ENCODE measurements at regions of chr22 and their contacts with region 1.

Region 1: DNA sequence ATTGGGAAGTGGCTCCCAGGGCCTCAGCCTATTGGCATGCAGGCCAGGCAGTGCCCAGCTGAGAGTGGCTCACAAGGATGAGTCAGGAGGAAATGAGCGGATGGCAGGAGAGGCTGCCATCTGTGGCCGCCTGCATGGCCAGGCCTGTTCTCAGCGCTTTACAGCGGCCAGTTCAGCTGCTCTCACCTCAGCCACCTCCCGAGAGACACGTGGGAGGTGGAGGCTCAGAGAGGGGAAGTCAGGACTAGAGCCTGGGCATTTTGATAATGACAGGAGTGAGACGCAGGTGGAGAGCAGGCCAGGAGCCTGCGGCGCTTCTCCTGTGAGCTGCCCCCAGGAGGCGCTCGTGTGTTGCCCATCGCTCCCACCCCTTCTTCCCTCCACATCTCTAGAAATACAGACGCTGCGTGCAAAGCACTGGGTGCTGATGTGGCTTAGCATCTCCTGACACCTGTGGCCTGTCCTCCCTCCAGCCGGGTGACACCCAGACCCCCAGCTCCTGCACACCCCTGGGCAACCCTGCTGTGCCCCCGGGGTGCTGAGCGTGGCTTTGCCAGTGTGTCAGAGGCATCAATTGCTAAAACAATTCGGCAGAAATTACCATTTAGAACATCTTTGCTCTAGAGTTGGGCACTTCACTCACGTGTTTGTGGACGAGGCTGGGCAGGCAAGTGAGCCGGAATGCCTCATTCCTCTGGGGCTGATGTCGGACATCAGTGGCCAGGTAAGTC is 21.4 kb upstream of the PANX2 start:
- DNase-seq: peak in 2 of 3 donors; percentile 74 to 77
- ATAC-seq: peak; percentile 44 to 61
- H3K4me3 ChIP-seq: no peak overlapping the region
- H3K27ac ChIP-seq: no peak overlapping the region
- H3K4me1 ChIP-seq: no peaks in the 10 kb centered on the region
- H3K27me3 ChIP-seq: no peaks in the 10 kb centered on the region

Region 2: DNA sequence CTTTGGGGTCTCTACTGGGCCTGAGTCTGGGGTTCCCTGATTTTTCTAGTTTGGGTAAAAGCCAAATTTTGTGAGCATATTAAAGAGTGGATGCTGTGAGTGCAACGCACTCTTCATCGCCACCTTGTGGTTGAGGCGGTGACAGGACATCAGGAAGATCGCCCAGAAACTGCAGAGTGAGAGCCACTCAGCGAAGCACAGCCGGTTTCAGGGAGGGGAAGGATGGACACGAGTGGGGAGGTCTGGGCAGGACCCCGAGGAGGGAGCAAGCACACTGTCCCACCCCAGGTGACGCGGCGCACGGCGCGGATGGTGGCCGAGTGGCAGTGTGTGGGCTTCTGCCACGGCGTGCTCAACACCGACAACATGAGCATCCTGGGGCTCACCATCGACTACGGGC is 60.7 kb after region 1 on chr22:
- intact Hi-C with region 1: loop called (anchors 2 to 5 kb)
- DNase-seq: peak; percentile 77 to 87 (median 79)
- ATAC-seq: peak; percentile 7 to 28
- H3K4me3 ChIP-seq: no peak overlapping the region
- H3K27ac ChIP-seq: no peak overlapping the region
- H3K4me1 ChIP-seq: no peaks in the 10 kb centered on the region
- H3K27me3 ChIP-seq: no peaks in the 10 kb centered on the region

Measured in right cardiac atrium (tissue), 5 donors.